Natural killer cell (primary cell): ENCODE measurements at regions of chr12 and their contacts with region 1.

Region 1: DNA sequence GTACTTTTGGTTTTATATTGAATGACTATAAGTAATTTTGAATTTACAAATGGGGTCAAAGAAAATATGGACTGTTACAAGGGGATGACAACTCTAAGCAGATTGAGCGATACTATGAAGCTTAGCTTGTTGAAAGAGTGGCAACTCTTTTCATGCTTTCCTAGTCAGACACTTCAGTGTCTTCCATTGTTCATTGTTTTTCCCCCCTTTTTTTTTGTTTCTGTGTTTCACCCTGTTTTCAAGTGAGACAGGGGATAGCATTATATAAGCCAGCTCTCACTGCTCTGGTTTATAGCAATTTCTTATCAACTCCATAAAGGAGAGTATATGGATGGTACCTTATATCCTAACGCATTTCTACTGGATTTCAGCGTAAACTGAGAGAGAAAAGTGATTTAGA is 24.6 kb downstream of the PEBP1 start:
- DNase-seq: no peak
- ATAC-seq: no peak
- H3K4me3 ChIP-seq: no peak overlapping the region
- H3K4me3 Mint-ChIP-seq: no peak overlapping the region
- H3K27ac ChIP-seq: no peak overlapping the region
- H3K27ac Mint-ChIP-seq: no peak overlapping the region
- H3K4me1 ChIP-seq: no peaks in the 10 kb centered on the region
- H3K4me1 Mint-ChIP-seq: no peaks in the 10 kb centered on the region
- H3K27me3 ChIP-seq: no peaks in the 10 kb centered on the region
- H3K27me3 Mint-ChIP-seq: no peaks in the 10 kb centered on the region
- CTCF ChIP-seq: no peak

Region 2: DNA sequence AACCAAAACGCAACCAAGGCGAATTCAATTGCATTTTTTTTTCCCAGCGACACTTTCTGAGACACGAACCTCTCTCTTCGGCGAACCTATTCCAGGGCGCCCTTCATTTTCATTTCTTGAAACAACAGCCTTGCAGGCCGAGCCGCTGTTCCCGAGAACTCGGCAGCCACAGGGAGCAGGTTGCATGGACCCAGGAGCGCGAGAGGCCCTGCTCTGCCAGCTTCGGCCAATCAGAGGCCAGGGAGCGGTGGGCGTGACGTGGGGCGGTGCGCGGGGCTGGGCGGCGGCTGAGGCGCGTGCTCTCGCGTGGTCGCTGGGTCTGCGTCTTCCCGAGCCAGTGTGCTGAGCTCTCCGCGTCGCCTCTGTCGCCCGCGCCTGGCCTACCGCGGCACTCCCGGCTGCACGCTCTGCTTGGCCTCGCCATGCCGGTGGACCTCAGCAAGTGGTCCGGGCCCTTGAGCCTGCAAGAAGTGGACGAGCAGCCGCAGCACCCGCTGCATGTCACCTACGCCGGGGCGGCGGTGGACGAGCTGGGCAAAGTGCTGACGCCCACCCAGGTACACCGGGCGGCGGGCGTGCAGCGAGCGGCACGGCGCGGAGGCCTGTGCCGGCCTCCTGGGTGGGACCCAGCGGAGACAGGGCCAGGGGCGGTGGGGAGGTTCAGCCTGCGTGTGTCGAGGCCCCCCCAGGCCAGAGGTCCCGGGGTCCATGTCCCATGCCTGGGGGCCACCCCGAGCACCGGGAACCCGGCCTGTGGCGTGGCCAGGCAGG is 24.6 kb before region 1 on chr12 and contains the start of gene PEBP1:
- intact Hi-C with region 1: loop called (anchors 1 kb)
- DNase-seq: peak; percentile 90 to 94
- ATAC-seq: peak; percentile 99 to 100 (median 100)
- H3K4me3 ChIP-seq: peak within 1 kb of the TSS; percentile 47
- H3K4me3 Mint-ChIP-seq: peak within 1 kb of the TSS; percentile 98
- H3K27ac ChIP-seq: peak within 1 kb of the TSS; percentile 32
- H3K27ac Mint-ChIP-seq: peak within 1 kb of the TSS; percentile 74 to 77
- H3K4me1 ChIP-seq: peaks cover 20% of the 10 kb centered on the region
- H3K4me1 Mint-ChIP-seq: peaks cover 6 to 19% of the 10 kb centered on the region in 2 donors
- H3K27me3 ChIP-seq: no peaks in the 10 kb centered on the region
- H3K27me3 Mint-ChIP-seq: no peaks in the 10 kb centered on the region
- CTCF ChIP-seq: no peak
- total RNA-seq, gene PEBP1: 38.0 to 54.0 (median 41.4) TPM